ENCODE measurements at regions of chr20 and their contacts with region 1.

Region 1: DNA sequence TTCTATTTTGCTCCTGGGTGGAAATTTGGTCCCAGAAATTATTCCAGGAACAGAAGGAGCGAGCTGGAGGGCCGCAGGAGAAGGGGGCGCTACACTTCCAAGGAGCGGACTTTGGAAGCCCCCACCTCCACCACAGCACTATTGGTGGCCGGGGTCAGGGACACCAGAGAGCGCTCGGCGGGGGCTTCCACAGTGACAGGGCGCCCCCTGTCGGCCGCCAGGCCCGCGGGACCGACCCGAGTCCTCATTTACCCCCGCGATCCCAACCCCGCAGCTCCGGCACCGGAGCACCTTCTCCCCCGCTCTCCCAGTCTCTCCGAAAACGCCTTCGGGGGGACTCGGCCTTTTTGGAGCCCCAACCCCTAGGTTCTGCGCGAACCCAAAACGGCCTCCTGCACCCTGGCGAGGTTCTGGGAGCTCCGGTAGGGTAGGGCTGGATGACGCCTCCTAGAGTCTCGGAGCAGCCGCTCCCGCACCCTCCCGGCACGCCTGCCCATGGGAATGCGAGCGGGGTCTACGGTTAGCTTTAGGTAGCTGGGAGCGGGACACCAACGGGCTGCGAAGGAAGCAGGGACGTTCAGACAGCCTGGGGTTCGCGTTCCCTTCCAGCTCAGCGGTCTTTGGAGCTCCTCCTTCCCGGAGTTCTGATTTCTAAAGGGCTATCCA is 2.4 kb upstream of the FOXA2 start:
- DNase-seq: no peak
- H3K4me3 ChIP-seq: no peak overlapping the region
- H3K27ac ChIP-seq: no peak overlapping the region
- H3K4me1 ChIP-seq: no peaks in the 10 kb centered on the region
- H3K27me3 ChIP-seq: peaks cover 68 to 90% of the 10 kb centered on the region in 2 experiments
- CTCF ChIP-seq: peak; percentile 51 to 80
- POLR2A ChIP-seq: no peak

Region 2: DNA sequence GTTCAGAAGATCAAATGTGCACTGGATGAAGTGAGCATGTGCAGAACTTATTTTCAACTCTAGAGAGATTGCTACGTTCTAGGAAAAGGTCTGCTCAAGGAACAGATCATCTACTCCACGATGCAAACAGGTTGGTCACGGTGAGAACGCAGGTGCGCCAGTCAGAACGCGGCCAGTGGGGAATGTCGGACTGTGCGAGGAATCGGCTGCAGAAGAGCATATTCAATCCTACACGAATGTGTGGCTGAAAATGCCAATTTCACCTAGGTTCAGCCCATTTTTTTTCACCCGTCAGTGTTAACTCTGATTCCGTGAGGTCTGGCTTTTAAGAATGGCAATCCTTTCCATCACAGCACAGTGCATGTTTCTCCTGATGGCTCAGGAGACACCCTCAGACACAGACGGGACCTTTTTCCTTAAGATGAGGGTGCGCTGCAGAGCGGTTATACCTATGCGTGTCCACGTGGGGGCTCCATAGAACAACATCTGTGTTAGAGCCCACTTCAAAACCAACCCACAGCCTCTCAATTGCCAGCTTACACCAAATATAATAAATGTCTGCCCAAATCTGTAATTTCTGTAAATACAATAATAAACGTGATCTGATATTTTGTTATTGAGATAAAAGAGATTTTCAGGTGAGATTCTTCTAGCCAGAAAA is 252.8 kb before region 1 on chr20:
- CTCF ChIA-PET with region 1: interaction called, 75 read pairs
- POLR2A ChIA-PET with region 1: no interaction called
- dilution Hi-C with region 1: no loop called
- intact Hi-C with region 1: loop called (anchors 1 kb)
- DNase-seq: peak; percentile 62
- H3K4me3 ChIP-seq: no peak overlapping the region
- H3K27ac ChIP-seq: no peak overlapping the region
- H3K4me1 ChIP-seq: no peaks in the 10 kb centered on the region
- H3K27me3 ChIP-seq: peaks cover 0 to 5% of the 10 kb centered on the region in 2 experiments
- CTCF ChIP-seq: peak; percentile 63 to 79
- POLR2A ChIP-seq: no peak

Region 3: DNA sequence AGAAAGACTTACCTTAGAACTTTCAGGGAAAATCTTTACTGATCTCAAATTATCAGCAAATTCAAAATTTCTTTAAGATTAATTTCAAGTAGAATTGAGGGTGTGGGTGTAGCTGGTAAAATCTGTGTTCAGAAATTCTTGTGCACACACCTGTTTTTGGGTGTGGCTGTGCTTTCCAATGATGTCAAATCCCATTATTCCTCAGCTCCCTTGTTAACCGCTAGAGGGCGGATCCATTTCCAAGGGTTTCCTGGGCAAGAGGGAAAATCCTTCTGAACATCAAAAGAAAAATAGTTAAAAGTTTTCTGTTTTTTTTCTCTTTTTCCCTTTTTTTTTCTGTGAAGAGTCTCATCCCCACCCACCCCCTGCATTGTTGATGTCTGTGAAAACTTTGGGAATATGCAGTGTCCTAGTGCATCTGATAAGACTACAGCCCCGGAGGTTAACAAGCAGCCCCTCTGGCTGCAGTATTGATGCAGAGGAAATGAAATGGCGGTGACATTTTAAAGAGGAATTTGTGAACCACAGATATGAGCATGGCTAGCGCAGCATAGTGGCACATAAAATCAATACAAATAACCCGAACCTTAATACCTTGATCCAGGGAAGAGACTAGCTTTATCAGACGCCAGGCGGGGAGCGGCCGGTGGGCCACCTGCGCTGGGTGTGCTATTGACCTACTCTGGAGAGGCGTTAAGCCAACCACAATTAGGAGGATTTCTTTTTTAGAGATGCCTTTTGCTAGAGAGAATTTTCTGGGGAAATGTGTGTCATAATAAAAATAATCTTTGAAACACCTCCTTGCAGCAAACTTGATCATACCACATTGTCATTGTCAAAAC is 133.3 kb before region 1 on chr20:
- CTCF ChIA-PET with region 1: interaction called, 34 read pairs
- POLR2A ChIA-PET with region 1: no interaction called
- dilution Hi-C with region 1: no loop called
- intact Hi-C with region 1: loop called (anchors 1 kb)
- DNase-seq: peak; percentile 11
- H3K4me3 ChIP-seq: no peak overlapping the region
- H3K27ac ChIP-seq: no peak overlapping the region
- H3K4me1 ChIP-seq: no peaks in the 10 kb centered on the region
- H3K27me3 ChIP-seq: peaks cover 0 to 2% of the 10 kb centered on the region in 2 experiments
- CTCF ChIP-seq: peak; percentile 55 to 64
- POLR2A ChIP-seq: no peak

Region 4: GRCh38 chr20:22511943-22512910 is 74.6 kb before region 1 on chr20:
- CTCF ChIA-PET with region 1: no interaction called
- POLR2A ChIA-PET with region 1: no interaction called
- dilution Hi-C with region 1: no loop called
- intact Hi-C with region 1: loop called (anchors 5 kb)
- DNase-seq: peak; percentile 85
- H3K4me3 ChIP-seq: no peak overlapping the region
- H3K27ac ChIP-seq: no peak overlapping the region
- H3K4me1 ChIP-seq: peaks cover 13% of the 10 kb centered on the region
- H3K27me3 ChIP-seq: peaks cover 4 to 5% of the 10 kb centered on the region in 2 experiments
- CTCF ChIP-seq: no peak
- POLR2A ChIP-seq: no peak

Region 5: DNA sequence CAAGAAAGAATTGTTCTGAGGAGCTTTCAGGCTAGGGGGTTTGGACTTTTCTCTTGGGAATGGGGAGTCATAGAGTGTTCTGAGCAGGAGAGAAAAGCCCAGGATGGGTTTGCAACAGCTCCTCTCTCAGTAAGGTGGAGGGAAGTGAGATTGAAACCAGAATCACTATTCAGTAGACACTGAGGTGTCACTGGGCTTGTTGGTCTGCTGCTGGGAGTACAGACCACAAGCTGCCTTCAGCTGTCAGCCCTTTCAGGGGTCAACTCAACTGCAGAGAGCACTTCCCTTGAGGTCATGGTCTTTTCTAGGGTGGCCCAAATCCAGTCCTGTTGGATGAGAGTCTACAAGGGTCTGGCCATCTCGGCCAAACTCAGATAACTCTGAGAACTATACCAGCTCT is 10.5 kb after region 1 on chr20:
- CTCF ChIA-PET with region 1: interaction called, 15 read pairs
- POLR2A ChIA-PET with region 1: no interaction called
- dilution Hi-C with region 1: no loop called
- intact Hi-C with region 1: no loop called
- DNase-seq: no peak
- H3K4me3 ChIP-seq: no peak overlapping the region
- H3K27ac ChIP-seq: no peak overlapping the region
- H3K4me1 ChIP-seq: no peaks in the 10 kb centered on the region
- H3K27me3 ChIP-seq: peaks cover 0 to 10% of the 10 kb centered on the region in 2 experiments
- CTCF ChIP-seq: no peak
- POLR2A ChIP-seq: no peak